ENCODE measurements at regions of chr22 and their contacts with region 1.

Region 1: DNA sequence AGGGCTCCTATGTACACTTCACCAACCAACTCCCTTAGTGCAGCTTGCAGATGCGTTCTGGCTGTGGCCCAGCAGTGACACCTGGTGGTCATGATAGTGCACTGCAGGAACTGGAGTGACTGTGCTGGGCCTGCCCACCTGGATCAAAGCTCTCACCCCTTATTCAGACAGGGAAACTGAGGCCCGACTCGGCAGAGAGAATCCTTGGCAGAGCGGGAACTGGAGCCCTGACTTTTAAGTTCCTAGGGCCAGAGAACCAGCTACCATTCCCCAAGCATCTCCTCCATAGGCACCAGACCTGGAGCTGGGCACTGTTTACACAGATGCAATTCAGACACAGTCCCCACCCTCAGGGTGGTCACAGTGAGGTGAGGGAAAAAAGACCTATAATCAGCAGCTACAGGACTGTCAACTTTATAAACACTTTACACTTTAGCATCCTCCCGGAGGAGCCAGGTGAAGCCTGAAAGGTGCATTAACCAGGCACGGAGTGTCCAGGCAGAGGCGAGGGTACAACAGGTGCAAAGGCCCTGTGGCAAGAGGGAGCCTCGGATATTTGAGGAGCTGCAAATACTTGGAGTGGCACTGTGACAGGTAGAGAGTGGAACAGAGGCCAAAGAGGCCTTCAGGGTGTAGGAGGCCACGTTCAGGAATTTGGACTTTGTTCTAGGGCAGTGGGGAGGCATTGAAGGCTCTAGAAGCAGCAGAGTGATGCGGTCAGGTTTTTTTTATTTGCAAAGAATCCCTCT is 22.0 kb downstream of the RHBDD3 start:
- DNase-seq: peak; percentile 64
- H3K4me3 Mint-ChIP-seq: no peak overlapping the region
- H3K27ac Mint-ChIP-seq: no peak overlapping the region
- H3K4me1 Mint-ChIP-seq: no peaks in the 10 kb centered on the region
- H3K27me3 Mint-ChIP-seq: peaks cover 14% of the 10 kb centered on the region
- CTCF ChIP-seq: peak; percentile 95

Region 2: DNA sequence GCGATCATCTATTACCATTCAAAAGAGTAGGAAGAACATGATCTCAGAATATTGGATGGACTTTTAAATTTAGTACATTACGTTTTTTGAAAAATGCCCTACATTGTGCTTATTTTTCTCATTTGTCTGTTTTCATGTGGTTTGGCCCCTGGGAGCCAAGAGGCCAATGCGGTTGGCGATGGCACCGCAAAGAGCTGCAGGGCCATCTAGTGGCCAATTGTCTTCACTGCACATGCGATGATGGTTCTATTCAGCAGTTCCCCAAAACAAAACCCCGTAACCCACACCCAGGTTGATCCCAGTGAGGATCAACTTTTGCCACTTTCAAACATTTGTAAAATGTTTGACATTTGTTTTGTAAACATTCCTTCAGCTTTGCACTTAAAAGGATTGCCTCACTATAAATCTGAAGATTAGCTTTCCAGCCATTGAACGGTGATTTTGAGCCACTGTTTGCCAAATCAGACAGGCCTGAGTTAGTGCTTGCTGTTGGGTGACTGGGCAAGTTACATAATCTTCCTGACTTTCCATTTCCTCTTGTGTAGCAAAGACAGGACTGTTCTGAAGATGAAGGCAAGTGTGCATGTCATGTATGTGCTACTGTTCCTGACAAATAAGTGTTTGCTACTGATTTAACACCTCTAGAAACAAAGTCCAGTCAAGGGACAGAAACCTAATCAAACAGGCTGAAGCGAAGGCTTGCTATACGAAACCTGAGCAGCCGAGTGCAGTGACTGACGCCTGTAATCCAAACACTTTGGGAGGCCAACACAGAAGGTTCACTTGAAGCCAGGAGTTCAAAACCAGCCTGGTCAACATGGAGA is 416.2 kb before region 1 on chr22:
- CTCF ChIA-PET with region 1: interaction called, 9 read pairs
- POLR2A ChIA-PET with region 1: no interaction called
- intact Hi-C with region 1: loop called (anchors 1 kb)
- DNase-seq: peak; percentile 69
- H3K4me3 Mint-ChIP-seq: no peak overlapping the region
- H3K27ac Mint-ChIP-seq: no peak overlapping the region
- H3K4me1 Mint-ChIP-seq: no peaks in the 10 kb centered on the region
- H3K27me3 Mint-ChIP-seq: no peaks in the 10 kb centered on the region
- CTCF ChIP-seq: peak; percentile 94

Region 3: GRCh38 chr22:28855355-28856094 is 390.3 kb before region 1 on chr22:
- CTCF ChIA-PET with region 1: interaction called, 6 read pairs
- POLR2A ChIA-PET with region 1: no interaction called
- intact Hi-C with region 1: loop called (anchors 1 kb)
- DNase-seq: peak; percentile 67
- H3K4me3 Mint-ChIP-seq: no peak overlapping the region
- H3K27ac Mint-ChIP-seq: no peak overlapping the region
- H3K4me1 Mint-ChIP-seq: peaks cover 7% of the 10 kb centered on the region
- H3K27me3 Mint-ChIP-seq: peaks cover 11% of the 10 kb centered on the region
- CTCF ChIP-seq: peak; percentile 89

Region 4: GRCh38 chr22:29202212-29203192 is 43.3 kb before region 1 on chr22:
- CTCF ChIA-PET with region 1: interaction called, 8 read pairs
- POLR2A ChIA-PET with region 1: interaction called, 4 read pairs
- intact Hi-C with region 1: loop called (anchors 1 kb)
- DNase-seq: peak; percentile 21
- H3K4me3 Mint-ChIP-seq: no peak overlapping the region
- H3K27ac Mint-ChIP-seq: no peak overlapping the region
- H3K4me1 Mint-ChIP-seq: peaks cover 6% of the 10 kb centered on the region
- H3K27me3 Mint-ChIP-seq: peaks cover 11% of the 10 kb centered on the region
- CTCF ChIP-seq: peak; percentile 12

Region 5: GRCh38 chr22:29257751-29258181 is 12.0 kb after region 1 on chr22:
- CTCF ChIA-PET with region 1: interaction called, 17 read pairs
- POLR2A ChIA-PET with region 1: no interaction called
- intact Hi-C with region 1: no loop called
- DNase-seq: no peak
- H3K4me3 Mint-ChIP-seq: no peak overlapping the region
- H3K27ac Mint-ChIP-seq: no peak overlapping the region
- H3K4me1 Mint-ChIP-seq: no peaks in the 10 kb centered on the region
- H3K27me3 Mint-ChIP-seq: peaks cover 1% of the 10 kb centered on the region
- CTCF ChIP-seq: no peak

Region 6: DNA sequence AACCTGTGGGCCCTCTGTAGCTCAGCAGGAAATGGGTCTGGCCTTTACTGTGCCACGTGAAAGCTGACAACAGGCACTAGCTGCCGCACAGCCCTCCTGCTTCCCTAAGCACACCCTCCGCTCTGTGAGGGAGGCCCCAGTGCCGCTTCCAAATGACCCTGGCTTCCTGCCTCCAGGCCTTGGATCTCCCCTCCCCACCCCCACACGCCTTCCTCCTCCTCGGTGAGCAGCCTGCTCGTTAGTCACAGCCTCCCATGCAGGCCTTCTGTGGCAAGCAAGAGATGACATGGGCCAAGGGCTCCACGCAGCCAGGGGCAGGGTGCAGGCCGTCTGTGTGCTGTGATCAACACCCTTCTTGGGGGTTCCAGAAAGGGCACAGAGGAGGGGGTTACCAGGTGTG is 84.9 kb after region 1 on chr22:
- CTCF ChIA-PET with region 1: no interaction called
- POLR2A ChIA-PET with region 1: no interaction called
- intact Hi-C with region 1: no loop called
- DNase-seq: no peak
- H3K4me3 Mint-ChIP-seq: no peak overlapping the region
- H3K27ac Mint-ChIP-seq: no peak overlapping the region
- H3K4me1 Mint-ChIP-seq: peaks cover 5% of the 10 kb centered on the region
- H3K27me3 Mint-ChIP-seq: no peaks in the 10 kb centered on the region
- CTCF ChIP-seq: no peak

Region 7: DNA sequence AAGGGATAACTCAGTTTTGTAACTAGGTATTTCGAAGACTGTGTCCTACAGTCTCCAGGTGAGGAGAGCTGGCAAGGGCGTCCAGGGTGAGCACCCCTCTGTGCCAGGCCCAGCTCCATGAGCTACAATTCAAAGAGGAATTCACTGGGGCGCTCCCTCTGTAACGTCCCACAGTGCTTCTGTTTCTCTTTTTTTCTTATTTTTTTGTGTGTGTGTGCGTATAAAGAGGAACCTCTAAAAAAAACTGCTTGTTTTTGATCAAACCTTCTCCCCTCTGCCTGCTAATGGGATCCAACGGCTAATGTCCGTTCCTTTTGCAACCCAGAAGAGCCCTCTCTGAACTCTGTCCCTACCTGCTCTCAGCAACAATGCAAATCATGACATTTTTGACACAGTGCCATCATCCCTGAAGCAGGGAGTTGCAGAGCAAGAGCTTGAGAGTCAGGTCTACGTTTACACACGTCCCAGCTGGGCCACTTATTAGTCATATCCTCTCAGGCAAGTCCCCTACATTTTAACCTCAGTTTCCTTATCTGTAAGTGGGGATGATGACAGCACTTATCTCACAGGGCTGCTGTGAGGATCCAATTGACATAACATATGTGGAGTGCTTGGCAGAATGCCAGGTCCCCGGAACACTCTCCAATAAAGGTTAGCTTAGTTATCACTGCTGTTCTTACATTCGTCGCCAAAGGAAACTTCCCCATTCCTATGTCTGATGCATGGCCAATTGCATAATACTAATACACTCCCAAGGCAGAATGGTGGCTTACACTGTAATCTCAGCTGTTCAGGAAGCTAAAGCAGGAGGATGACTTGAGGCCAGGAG is 575.4 kb after region 1 on chr22:
- CTCF ChIA-PET with region 1: no interaction called
- POLR2A ChIA-PET with region 1: no interaction called
- intact Hi-C with region 1: no loop called
- DNase-seq: peak; percentile 92
- H3K4me3 Mint-ChIP-seq: peak overlapping the region; percentile 9
- H3K27ac Mint-ChIP-seq: peak overlapping the region; percentile 70
- H3K4me1 Mint-ChIP-seq: peaks cover 16% of the 10 kb centered on the region
- H3K27me3 Mint-ChIP-seq: no peaks in the 10 kb centered on the region
- CTCF ChIP-seq: no peak

Measured in MCF 10A (cell line).